Motor neuron (in vitro differentiated cells): ENCODE measurements at regions of chr1 and their contacts with region 1.

Region 1: DNA sequence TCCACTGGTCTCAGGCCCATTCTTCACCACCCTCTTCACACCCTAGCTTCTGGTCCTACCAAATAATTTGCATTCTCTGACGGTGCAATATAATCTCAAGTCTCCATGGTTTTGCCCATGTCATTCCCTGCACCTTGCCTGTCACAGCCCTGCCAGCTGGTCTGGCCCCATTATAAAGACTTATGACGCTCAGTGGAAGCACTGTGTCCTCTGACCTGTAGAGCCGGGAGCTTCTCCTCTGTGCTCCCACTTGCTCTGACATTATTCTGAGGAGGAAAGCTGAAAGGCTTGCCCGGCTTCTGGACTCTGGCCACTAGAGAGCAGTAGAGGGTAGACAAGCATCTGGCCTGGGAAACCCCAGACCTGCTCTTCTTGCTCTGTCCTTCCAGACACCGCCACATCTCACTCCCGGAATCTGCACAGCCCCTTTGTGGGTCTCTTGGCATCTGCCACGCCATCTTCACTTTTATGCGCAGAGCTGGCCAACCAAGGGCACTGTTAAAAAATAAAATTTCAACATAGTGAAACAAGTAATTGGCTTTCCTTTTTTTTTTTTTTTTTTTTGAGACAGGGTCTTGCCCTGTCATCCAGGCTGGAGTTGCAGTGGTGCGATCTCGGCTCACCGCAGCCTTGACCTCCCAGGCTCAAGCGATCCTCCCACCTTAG is 44.4 kb downstream of the NENF start:
- ATAC-seq: peak; percentile 95 to 99 (median 99)
- H3K4me3 ChIP-seq: peak overlapping the region in 1 of 5 donors; percentile 1
- H3K27ac ChIP-seq: no peak overlapping the region
- H3K4me1 ChIP-seq: peaks cover 2 to 8% of the 10 kb centered on the region in 2 donors

Region 2: DNA sequence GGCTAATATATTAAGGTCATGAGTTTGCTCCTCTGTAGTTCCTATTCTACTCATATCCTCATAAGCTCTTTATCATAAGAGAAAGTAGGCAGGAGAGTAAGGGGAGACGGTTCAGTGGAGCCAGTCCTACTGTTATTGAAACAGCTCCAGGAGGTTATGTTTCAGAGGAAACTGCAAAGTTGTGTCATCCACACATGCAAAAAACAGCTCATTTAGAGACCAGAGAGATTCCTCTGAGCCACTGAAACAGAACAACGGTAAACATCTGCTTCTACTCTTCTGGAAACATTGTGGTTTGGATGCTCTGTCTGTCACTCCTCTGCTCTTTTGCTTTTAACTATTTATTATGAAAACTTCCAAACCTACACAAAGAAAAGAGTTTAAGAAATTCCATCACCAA is 258.2 kb before region 1 on chr1:
- in situ Hi-C with region 1: no loop called
- ATAC-seq: peak in 2 of 8 experiments; percentile 48 to 76
- H3K4me3 ChIP-seq: no peak overlapping the region
- H3K27ac ChIP-seq: no peak overlapping the region
- H3K4me1 ChIP-seq: no peaks in the 10 kb centered on the region

Region 3: DNA sequence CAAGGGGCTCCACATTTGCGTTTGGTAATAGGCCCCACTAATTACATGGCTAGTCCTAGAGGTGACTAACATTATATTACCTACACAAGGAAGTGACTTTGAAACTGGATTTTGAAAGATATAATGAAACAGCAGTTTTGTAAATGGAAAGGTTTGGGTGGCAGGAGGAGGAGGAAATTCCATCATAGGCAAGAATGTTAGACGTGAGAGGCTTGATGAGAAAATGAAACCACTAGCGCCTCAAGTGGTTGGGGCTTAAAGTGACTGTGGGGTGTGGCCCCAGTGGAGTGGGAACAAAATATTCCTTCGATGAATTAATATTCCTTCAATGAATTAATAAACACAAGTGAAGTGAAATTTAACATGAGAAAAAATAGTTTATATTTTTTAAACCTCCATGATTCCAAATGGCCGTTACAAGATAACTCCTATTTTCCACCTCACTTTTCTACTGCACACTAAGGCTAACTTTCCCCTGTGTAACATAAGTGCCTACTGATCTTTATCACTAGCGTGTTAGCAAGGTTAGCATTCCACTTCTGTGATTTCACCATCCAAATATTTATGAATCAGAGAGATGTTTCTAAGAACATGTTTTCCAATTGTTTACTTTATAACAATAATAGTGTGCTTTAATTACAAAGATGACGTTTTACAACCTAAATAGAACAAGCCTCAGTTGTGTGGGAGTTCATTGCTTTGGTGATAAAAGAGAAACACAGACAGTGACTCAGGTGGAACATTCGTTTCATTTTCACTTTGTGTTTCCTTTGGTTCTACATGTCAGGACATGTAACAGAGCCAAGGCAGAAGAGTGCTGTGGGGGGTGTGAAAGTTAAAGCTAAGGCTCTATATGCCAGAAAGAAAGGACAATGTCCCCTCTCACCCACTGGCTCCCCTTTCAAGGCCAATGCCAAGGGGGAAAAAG is 118.9 kb after region 1 on chr1:
- in situ Hi-C with region 1: loop called in 3 of 9 experiments (anchors 25 kb)
- ATAC-seq: peak in 5 of 8 experiments; percentile 32 to 93 (median 79)
- H3K4me3 ChIP-seq: no peak overlapping the region
- H3K27ac ChIP-seq: no peak overlapping the region
- H3K4me1 ChIP-seq: peaks cover 10 to 15% of the 10 kb centered on the region in 2 donors

Region 4: GRCh38 chr1:212608209-212608955 is 131.2 kb after region 1 on chr1 and contains the start of gene ATF3:
- in situ Hi-C with region 1: loop called in 1 of 9 experiments (anchors 25 kb)
- ATAC-seq: peak; percentile 54 to 88 (median 85)
- H3K4me3 ChIP-seq: peak within 1 kb of the TSS; percentile 54 to 79 (median 61)
- H3K27ac ChIP-seq: peak within 1 kb of the TSS; percentile 73 to 86
- H3K4me1 ChIP-seq: peaks cover 34 to 38% of the 10 kb centered on the region in 2 donors
- total RNA-seq, gene ATF3: 14.5 to 244 (median 28.7) TPM

Region 5: DNA sequence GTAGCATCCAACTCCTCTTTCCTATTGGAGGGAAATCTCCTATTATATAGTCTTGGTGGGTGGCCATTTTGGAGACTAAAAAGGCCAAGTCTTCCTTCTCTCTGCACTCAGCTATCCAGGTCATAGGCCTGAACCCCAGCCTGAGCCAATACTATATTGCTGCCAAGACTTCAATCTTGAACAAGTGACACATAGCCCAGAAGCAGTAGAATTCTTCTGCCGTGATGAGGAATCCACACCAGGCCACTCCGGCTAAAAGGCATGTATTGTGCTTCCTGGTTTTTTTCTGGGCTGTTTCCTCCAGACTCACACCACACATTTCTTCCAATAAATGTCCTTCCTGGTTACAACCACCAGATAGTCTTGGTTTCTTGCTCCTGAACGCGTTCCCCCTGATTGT is 174.4 kb after region 1 on chr1:
- in situ Hi-C with region 1: no loop called
- ATAC-seq: no peak
- H3K4me3 ChIP-seq: no peak overlapping the region
- H3K27ac ChIP-seq: no peak overlapping the region
- H3K4me1 ChIP-seq: no peaks in the 10 kb centered on the region

Region 6: DNA sequence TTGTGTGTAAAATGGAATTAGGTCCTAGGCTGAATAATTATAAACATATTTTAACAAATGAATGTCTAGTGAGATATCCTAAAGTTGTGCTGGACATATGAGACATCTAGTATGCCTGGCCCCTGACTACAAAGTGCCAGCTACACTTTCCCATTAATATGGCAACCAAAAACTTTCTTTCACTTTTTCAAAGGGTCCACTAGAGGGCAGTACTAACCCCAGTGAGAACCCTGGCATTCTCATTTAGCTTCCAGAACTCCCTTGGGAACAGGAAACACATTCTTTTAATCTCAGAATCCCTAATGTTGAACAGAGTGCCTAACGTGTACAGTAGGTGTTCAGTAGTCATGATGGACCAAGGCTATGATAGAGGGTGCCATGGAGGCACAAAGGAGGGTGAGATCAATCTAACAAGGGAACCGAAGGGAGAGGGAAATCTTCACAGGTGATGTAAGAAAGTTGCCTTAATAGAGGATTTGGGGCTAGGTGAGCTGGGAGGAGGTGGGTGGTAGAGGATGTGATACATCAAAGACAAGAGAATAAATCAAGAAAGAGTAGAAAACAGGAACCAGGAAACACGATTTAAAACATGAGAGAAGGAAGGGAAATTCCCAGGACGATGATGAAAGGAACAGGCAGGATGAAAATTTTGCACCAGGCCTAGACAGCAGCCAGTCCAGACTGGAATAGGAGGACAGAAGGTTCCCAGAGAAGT is 272.8 kb after region 1 on chr1:
- in situ Hi-C with region 1: loop called in 1 of 9 experiments (anchors 25 kb)
- ATAC-seq: peak in 4 of 8 experiments; percentile 66 to 70 (median 69)
- H3K4me3 ChIP-seq: no peak overlapping the region
- H3K27ac ChIP-seq: no peak overlapping the region
- H3K4me1 ChIP-seq: peaks cover 0 to 2% of the 10 kb centered on the region in 2 donors

Region 7: DNA sequence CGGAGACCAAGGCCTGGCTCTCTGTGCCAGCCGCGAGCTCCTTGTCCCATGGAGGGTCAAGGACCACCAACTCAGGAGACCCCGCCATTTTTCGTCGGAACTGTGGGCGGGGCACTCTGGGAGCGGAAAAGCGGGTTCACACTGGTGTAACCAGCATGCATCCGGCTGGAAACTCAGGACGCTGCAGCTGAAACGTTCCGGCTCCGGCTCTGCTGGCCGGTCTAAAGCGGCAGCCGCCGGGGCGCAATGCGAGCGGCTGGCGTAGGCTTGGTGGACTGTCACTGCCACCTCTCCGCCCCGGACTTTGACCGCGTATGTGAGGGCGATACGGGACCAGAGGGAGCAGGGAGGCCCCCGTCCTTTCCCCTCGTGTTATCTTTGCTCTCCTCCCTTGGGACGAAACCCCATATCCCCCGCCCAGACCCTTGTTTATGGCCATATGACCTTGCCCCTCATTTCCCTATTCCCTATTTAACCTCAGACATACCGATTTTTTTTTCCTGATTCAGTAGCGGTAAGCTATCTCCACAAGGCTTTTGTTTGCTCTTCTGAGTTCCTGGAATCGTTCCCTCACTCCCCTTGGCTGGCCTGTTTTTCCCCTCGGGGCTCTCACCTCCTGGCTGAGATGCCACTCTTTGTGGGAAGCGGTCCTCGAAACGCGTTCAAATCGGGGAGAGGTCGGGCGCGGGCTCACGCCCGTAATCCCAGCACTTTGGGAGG is 314.7 kb after region 1 on chr1 and contains the starts of genes NSL1 and TATDN3:
- in situ Hi-C with region 1: loop called in 2 of 9 experiments (anchors 25 kb)
- ATAC-seq: peak; percentile 90 to 98 (median 97)
- H3K4me3 ChIP-seq: peak within 1 kb of the TSS; percentile 70 to 89 (median 84)
- H3K27ac ChIP-seq: peak within 1 kb of the TSS; percentile 88 to 93
- H3K4me1 ChIP-seq: peaks cover 22% of the 10 kb centered on the region in 2 donors
- total RNA-seq, gene NSL1: 13.7 to 47.6 (median 35.1) TPM
- total RNA-seq, gene TATDN3: 11.6 to 48.9 (median 22.9) TPM

Region 8: DNA sequence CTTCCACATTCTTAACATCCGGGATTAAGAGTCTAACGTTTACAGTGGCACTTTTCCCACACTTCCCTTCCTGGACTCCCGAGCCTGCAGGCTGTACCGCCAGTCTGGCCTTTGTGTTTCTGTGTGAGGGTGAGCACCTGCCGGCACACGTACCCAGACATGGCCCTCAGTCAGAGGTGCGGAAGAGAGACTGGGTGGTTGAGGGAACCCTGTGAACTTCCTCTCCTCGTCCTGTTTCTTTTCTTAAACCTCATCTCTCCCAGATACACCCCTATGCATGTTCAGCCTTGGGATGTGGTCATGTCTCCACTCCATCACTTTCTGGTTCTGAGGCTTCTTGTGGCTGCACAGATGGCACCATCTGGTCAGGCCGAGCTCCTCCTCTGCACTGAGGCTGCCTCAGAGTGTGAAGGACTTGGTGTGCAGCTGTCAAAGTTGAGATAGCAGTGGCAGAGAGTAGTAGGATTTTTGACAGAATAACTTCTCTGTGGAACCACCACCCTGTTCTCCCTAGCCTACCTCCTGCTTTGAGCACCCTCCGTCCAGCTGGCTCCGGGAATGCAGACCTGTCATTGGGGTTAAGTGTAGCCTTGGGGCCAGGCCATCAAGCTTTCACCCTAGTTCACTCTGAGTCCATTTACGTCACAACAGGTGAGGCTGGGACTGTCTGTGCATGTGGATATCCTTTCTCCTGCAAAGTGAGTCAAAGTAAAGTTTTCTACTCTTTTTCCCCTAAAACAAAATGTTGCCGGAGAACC is 504.6 kb after region 1 on chr1:
- in situ Hi-C with region 1: loop called in 2 of 9 experiments (anchors 25 kb)
- ATAC-seq: peak in 2 of 8 experiments; percentile 13 to 18
- H3K4me3 ChIP-seq: no peak overlapping the region
- H3K27ac ChIP-seq: no peak overlapping the region
- H3K4me1 ChIP-seq: peaks cover 0 to 16% of the 10 kb centered on the region in 2 donors